Cardiac septum (tissue), 1 donor: ENCODE measurements at regions of chr9 and their contacts with region 1.

Region 1: DNA sequence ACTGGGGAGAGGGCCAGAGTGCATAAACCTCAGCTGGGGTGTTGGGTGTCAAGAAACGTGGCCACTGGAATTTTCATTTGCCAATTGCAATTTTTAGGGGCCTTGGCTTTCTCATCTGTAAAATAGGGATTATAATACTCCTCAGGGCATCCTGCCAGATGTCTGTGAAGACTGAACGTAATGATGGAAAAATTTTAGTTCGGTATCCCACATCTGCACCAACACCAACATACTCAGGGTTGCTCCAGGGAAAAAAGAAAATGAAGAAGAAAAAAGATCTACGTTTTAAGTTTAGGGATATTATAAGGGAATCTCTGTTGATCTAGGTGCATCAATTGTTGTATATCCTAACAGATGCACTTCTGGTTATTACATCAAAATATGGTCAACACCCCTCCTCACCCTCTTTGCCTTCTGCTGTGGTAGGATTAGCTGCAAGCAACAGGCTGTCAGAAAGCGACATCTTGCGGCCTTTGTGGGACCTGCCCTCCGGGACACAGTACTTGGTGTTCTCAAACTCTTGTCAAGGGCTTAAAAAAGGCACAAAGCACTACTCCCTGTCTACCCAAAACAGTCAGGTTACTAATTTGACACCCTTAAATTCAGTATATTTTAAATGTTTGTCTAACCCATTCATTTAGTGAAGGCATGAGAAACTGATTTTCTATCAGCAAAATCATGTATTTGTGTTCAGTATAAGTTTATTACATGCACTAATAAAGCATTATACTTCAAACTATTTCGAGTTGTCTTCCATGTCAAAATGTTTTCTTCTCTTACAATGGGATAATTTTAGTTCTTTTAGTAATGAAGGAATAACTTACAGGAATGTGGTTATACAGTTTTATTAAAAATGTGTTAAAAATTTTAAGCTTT is 8.3 kb upstream of the TBC1D2 start:
- DNase-seq: peak; percentile 89

Region 2: GRCh38 chr9:98207606-98208005 is 56.1 kb before region 1 on chr9:
- intact Hi-C with region 1: loop called (anchors 1 kb)
- DNase-seq: no peak

Region 3: GRCh38 chr9:98438666-98439065 is 174.9 kb after region 1 on chr9:
- intact Hi-C with region 1: no loop called
- DNase-seq: no peak